Panc1 (cell line): ENCODE measurements at regions of chr4 and their contacts with region 1.

Region 1: GRCh38 chr4:69617083-69617694 is 22.3 kb downstream of the UGT2A2 start:
- DNase-seq: no peak
- ATAC-seq: no peak
- H3K4me3 ChIP-seq: no peak overlapping the region
- H3K27ac ChIP-seq: no peak overlapping the region
- H3K4me1 ChIP-seq: no peaks in the 10 kb centered on the region
- H3K27me3 ChIP-seq: no peaks in the 10 kb centered on the region
- CTCF ChIP-seq: peak; percentile 36; the same call in 1 of the 2 replicates

Region 2: DNA sequence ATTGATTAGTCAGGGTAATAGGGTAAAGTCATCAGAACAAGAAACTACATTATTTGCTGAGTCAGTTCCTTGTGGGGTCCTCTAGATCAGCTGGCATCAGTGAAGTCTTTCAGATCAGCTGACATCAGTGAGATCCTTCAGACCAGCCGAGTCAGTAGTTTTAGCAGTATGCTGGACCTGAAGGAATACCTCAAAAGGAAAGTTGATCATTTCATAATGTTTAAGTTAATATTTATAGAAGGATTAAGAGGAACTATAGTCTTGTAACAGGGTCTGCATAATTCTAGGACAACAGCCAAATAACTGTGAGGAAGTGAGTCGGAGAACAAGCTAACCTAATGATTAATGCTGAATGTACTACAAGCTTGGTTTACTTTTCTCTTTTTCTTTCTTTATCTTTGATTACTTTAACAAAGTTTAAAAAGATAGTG is 521.9 kb before region 1 on chr4:
- CTCF ChIA-PET with region 1: no interaction called
- POLR2A ChIA-PET with region 1: no interaction called
- in situ Hi-C with region 1: no loop called
- intact Hi-C with region 1: no loop called
- DNase-seq: peak; percentile 69
- ATAC-seq: no peak
- H3K4me3 ChIP-seq: no peak overlapping the region
- H3K27ac ChIP-seq: no peak overlapping the region
- H3K4me1 ChIP-seq: no peaks in the 10 kb centered on the region
- H3K27me3 ChIP-seq: no peaks in the 10 kb centered on the region
- CTCF ChIP-seq: no peak

Region 3: GRCh38 chr4:69322055-69322454 is 295.1 kb before region 1 on chr4:
- CTCF ChIA-PET with region 1: no interaction called
- POLR2A ChIA-PET with region 1: no interaction called
- in situ Hi-C with region 1: no loop called
- intact Hi-C with region 1: loop called (anchors 2 kb)
- DNase-seq: no peak
- ATAC-seq: no peak
- H3K4me3 ChIP-seq: no peak overlapping the region
- H3K27ac ChIP-seq: no peak overlapping the region
- H3K4me1 ChIP-seq: no peaks in the 10 kb centered on the region
- H3K27me3 ChIP-seq: no peaks in the 10 kb centered on the region
- CTCF ChIP-seq: no peak

Region 4: DNA sequence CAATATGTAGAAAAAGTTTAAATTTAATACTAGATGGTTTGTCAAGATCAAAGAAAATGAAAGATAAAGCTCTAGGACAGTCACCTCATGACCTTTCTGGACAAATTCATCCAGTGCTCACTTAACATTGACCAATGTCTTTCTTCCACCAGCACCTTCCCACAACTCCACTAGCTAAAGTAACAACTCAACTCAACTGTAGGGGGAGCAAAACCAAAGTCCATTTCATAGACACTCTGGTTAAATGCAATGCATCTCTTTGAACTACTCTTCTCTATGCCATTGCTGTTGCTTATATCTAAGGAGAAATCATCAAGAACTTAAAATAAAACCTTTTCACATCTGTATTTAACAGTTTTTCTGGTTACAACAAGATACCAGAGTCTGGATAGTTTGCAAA is 146.6 kb before region 1 on chr4:
- CTCF ChIA-PET with region 1: no interaction called
- POLR2A ChIA-PET with region 1: no interaction called
- in situ Hi-C with region 1: no loop called
- intact Hi-C with region 1: no loop called
- DNase-seq: no peak
- ATAC-seq: no peak
- H3K4me3 ChIP-seq: no peak overlapping the region
- H3K27ac ChIP-seq: no peak overlapping the region
- H3K4me1 ChIP-seq: no peaks in the 10 kb centered on the region
- H3K27me3 ChIP-seq: no peaks in the 10 kb centered on the region
- CTCF ChIP-seq: no peak

Region 5: GRCh38 chr4:69531251-69531650 is 85.9 kb before region 1 on chr4:
- CTCF ChIA-PET with region 1: no interaction called
- POLR2A ChIA-PET with region 1: no interaction called
- in situ Hi-C with region 1: no loop called
- intact Hi-C with region 1: no loop called
- DNase-seq: no peak
- ATAC-seq: no peak
- H3K4me3 ChIP-seq: no peak overlapping the region
- H3K27ac ChIP-seq: no peak overlapping the region
- H3K4me1 ChIP-seq: no peaks in the 10 kb centered on the region
- H3K27me3 ChIP-seq: no peaks in the 10 kb centered on the region
- CTCF ChIP-seq: no peak

Region 6: GRCh38 chr4:69896530-69897116 is 279.4 kb after region 1 on chr4:
- CTCF ChIA-PET with region 1: no interaction called
- POLR2A ChIA-PET with region 1: no interaction called
- in situ Hi-C with region 1: no loop called
- intact Hi-C with region 1: no loop called
- DNase-seq: no peak
- ATAC-seq: no peak
- H3K4me3 ChIP-seq: no peak overlapping the region
- H3K27ac ChIP-seq: no peak overlapping the region
- H3K4me1 ChIP-seq: no peaks in the 10 kb centered on the region
- H3K27me3 ChIP-seq: no peaks in the 10 kb centered on the region
- CTCF ChIP-seq: peak; percentile 31; the same call in 1 of the 2 replicates